Psoas muscle (tissue), 8 donors: ENCODE measurements at regions of chr11 and their contacts with region 1.

Region 1: GRCh38 chr11:19951558-19952115 is 208.6 kb downstream of the DBX1 start:
- DNase-seq: no peak
- ATAC-seq: peak in 3 of 4 donors; percentile 57 to 72 (median 59)
- H3K4me3 ChIP-seq: no peak overlapping the region
- H3K27ac ChIP-seq: no peak overlapping the region
- H3K4me1 ChIP-seq: peaks cover 15% of the 10 kb centered on the region
- H3K27me3 ChIP-seq: no peaks in the 10 kb centered on the region
- CTCF ChIP-seq: peak; percentile 78

Region 2: GRCh38 chr11:20000351-20001134 is 48.9 kb after region 1 on chr11:
- intact Hi-C with region 1: loop called in 1 of 2 experiments (anchors 5 kb)
- DNase-seq: no peak
- ATAC-seq: no peak
- H3K4me3 ChIP-seq: no peak overlapping the region
- H3K27ac ChIP-seq: no peak overlapping the region
- H3K4me1 ChIP-seq: peaks cover 13% of the 10 kb centered on the region
- H3K27me3 ChIP-seq: no peaks in the 10 kb centered on the region
- CTCF ChIP-seq: no peak

Region 3: DNA sequence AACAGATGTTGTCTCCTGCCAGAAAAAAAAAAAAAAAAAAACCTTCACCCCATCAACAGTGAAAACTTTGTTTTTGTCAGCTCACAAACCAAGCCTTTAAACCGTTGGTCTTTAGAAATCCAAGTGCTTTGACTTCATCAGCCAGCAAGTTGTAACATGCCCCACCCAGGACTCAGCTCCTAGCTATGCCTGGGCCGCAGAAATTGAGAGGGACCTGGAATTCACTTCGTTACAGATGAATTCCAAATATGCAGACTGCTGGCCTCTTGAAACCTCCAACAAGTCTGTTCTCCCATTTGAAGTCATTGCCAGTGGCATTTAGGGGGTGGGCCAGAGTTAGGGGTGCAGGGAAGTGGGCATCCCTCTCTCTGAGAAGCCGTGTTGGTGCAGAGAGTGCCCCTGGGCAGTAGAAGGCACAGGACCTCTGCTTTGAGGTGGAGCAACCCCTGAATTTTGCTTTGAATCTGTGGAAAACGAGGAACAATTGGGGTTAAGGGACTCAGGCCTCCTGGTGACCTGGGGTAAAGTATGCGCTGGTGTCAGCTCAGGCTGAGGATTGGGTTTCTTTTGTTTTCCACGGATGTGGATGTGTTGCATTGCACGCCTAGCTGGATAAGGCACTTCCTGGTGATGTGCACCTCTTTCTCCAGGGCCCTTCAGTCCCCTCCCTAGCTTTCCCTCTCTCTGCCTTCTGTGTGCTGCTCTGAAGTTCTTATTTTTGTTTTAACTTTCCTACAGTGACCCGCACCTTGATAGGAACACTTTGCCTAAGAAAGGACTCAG is 99.1 kb after region 1 on chr11:
- intact Hi-C with region 1: loop called (anchors 5 to 10 kb)
- DNase-seq: no peak
- ATAC-seq: no peak
- H3K4me3 ChIP-seq: no peak overlapping the region
- H3K27ac ChIP-seq: no peak overlapping the region
- H3K4me1 ChIP-seq: peaks cover 41% of the 10 kb centered on the region
- H3K27me3 ChIP-seq: no peaks in the 10 kb centered on the region
- CTCF ChIP-seq: no peak

Region 4: DNA sequence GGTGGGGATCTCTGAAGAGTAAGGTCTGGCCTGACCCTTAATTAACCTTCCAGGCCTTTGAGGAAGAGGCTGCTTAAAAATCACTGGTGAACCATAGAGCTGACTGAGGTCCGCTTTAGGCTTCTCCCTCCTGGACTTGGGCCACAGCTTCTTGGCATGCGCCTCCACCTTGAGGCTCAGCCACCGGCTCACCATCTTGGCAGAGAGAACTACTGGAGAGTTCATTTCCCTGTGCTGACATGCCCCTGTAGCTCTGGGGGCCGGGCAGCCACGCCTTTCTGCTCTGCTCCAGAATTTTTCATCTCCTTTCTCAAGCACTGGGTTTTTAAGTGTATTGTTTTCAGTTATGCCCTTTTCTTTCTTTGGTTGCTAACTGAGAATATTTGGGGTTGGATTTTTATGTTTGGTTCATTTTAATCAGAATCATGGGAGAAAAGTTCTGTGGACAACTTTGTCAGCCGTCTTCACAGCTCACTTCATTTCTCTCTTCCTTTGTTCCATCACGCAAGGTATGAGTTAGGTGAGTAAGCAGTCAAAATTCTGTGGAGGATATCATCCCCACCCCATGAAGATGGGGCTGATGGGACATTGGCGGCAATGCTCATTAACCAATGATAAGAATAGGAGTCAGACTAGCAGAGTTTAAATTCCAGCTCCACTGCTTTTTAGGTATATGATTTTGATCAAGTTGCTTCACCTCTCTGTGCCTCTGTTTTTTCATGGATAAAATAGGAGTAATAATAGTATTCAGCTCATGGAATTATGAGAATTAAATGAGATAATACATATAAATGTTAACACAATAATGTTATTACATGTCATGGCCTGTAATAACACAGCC is 104.7 kb after region 1 on chr11:
- intact Hi-C with region 1: loop called (anchors 5 to 10 kb)
- DNase-seq: peak; percentile 30 to 80
- ATAC-seq: peak; percentile 58 to 84 (median 76)
- H3K4me3 ChIP-seq: no peak overlapping the region
- H3K27ac ChIP-seq: peak overlapping the region; percentile 70
- H3K4me1 ChIP-seq: peaks cover 52% of the 10 kb centered on the region
- H3K27me3 ChIP-seq: no peaks in the 10 kb centered on the region
- CTCF ChIP-seq: no peak

Region 5: GRCh38 chr11:20110908-20111669 is 159.5 kb after region 1 on chr11:
- intact Hi-C with region 1: loop called (anchors 2 to 5 kb)
- DNase-seq: no peak
- ATAC-seq: peak; percentile 52 to 72 (median 65)
- H3K4me3 ChIP-seq: no peak overlapping the region
- H3K27ac ChIP-seq: no peak overlapping the region
- H3K4me1 ChIP-seq: no peaks in the 10 kb centered on the region
- H3K27me3 ChIP-seq: no peaks in the 10 kb centered on the region
- CTCF ChIP-seq: peak; percentile 72

Region 6: DNA sequence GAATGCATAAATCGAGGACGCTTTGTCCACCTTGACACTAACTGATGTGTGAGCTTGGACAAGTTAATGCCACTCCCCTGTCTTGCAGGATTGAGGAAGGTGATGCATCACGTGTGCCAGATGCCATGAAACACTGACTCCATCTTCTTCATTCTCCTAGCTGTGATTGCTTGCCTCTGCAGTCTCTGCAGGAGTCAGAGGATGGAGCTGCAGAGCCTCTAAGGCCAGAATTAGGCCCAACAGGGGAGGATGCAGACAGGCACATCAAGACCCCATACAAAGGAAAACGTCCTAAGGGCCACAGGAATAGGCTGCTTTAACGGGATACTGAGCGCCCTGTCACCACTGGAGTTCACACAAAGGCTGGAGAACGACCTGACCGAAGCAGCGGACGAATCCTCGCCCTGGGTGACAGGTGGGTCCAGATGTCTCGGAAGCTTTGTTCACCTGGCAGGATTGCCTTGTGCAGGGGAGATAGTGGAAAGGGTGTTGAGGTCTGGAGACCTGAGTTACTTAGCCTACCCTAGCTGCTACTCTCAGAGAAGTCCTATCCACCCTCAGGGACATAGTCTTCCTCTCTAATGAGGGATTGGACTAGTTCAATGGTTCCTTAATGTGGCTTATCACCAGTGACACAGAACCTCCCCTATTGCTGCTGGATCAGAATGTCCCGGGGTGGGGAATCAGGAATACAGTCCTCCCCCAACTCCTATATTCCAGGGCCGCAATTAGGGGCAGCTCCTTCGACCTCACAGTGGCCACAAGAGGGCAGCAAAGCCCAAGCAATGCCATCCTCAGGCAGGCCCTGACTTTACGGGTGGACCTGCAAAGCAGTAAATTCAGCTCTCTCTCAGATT is 176.3 kb after region 1 on chr11:
- intact Hi-C with region 1: loop called (anchors 5 kb)
- DNase-seq: peak; percentile 73 to 86
- ATAC-seq: peak; percentile 79 to 96 (median 90)
- H3K4me3 ChIP-seq: no peak overlapping the region
- H3K27ac ChIP-seq: no peak overlapping the region
- H3K4me1 ChIP-seq: no peaks in the 10 kb centered on the region
- H3K27me3 ChIP-seq: no peaks in the 10 kb centered on the region
- CTCF ChIP-seq: peak; percentile 86

Region 7: DNA sequence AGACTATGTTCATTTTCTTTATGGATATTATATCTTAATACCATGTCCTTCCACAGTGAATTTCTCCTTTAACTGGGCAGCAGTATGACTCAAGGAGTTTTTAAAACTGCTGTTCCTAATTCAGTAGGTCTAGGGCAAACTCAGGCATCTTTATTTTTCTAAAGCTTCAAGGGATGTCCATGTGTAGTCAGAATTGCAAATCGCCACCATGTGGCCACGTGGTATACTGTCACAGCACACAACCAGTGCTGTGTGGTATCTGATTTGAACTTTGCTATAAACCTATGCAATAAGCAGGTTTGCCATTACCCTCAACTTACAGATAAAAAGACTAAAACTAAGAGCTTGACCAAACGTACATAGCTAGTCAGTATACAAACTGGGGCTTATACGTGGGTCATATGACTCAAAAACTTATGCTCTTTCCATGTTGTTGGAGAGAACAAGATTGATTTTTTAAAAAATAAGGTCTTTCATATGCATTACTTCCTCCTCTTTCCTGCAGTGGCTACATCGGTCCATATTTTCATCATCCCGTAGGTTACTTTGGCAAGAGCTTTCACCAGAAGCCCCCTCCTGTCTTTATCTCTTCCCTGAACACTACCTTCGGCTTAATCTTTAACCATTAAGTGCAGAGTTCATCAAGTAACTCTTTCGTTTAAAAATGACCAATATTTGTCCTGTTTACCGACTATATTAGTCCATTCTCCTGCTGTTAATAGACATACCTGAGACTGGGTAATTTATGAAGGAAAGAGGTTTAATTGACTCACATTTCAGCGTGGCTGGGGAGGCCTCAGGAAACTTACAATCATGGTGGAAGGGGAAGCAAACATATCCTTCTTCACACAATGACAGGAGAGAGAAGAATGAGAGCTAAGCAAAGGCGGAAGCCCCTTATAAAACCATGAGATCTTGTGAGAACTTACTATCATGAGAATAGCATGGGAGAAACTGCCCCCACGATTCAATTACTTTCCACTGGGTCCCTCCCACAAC is 403.9 kb after region 1 on chr11:
- intact Hi-C with region 1: loop called (anchors 5 to 10 kb)
- DNase-seq: no peak
- ATAC-seq: peak in 3 of 4 donors; percentile 61 to 73 (median 68)
- H3K4me3 ChIP-seq: no peak overlapping the region
- H3K27ac ChIP-seq: no peak overlapping the region
- H3K4me1 ChIP-seq: no peaks in the 10 kb centered on the region
- H3K27me3 ChIP-seq: no peaks in the 10 kb centered on the region
- CTCF ChIP-seq: peak; percentile 45